AG04450 (cell line): ENCODE measurements at regions of chr2 and their contacts with region 1.

Region 1: GRCh38 chr2:28068088-28068487 is 177.6 kb downstream of the BABAM2 start:
- DNase-seq: no peak
- H3K4me3 ChIP-seq: no peak overlapping the region
- H3K27ac ChIP-seq: no peak overlapping the region
- H3K27me3 ChIP-seq: no peaks in the 10 kb centered on the region
- CTCF ChIP-seq: no peak

Region 2: DNA sequence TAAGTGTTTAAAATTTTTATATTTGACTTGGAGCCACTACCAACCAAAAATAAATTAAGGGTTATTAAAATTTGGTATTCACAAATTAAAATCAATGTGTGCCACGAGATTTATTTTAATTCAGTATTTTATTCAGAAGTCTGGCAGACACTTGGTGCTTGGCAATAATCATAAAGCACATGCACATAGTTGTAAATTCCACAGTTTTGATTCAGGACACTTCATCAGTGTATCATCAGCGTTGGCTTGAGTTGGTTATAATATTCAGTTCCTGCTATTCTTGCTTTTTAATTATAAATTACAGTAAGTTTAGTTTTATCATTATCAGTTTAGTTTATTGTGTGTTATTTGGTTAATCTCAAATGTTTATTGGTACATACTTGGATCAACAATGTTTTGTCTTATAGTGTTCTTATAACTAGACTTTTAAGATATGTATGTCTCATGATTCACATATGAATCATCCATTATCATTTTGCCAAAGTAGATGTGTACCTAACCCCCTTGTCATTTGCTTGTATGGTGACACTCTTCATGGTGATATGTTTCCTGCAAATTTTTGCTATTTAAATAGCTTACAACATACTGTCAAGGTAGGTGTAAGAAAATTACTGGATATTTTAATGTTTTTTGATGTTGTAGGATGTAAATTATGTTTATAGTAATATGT is 60.3 kb after region 1 on chr2:
- CTCF ChIA-PET with region 1: no interaction called
- POLR2A ChIA-PET with region 1: interaction called, 12 read pairs
- DNase-seq: no peak
- H3K4me3 ChIP-seq: no peak overlapping the region
- H3K27ac ChIP-seq: no peak overlapping the region
- H3K27me3 ChIP-seq: no peaks in the 10 kb centered on the region
- CTCF ChIP-seq: no peak